PC-3 (cell line): ENCODE measurements at regions of chr13 and their contacts with region 1.

Region 1: DNA sequence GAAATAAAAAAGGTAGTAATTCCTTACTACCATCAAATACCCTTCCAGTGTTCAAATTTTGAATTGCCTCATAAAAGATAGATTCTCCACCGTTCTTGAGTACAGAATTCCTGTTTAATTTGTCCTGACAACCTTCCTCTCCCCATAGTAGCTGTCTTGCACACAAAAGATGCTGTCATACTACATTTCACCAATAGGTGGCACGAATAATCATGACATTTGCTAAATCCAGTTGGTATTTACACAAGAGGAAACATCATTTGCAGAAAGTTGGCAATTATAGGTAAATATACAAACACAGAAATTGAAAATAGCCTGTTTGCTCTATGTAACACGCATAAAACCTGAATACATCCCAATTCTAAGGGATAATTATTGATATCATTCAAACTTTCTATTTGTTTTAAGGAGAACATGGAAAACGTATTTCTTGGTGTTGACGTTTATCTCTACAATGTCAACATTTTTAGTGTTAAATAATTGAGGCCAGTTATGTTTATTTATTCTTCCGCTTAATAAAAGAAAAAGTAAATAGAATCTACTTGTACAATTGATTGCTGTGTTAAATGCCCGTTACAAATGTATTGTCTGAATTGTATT is 58.3 kb upstream of the CLDN10 start:
- DNase-seq: peak; percentile 83
- ATAC-seq: peak; percentile 72
- H3K4me3 ChIP-seq: no peak overlapping the region
- H3K27ac ChIP-seq: no peak overlapping the region
- H3K4me1 ChIP-seq: no peaks in the 10 kb centered on the region
- H3K27me3 ChIP-seq: no peaks in the 10 kb centered on the region
- CTCF ChIP-seq: peak; percentile 77

Region 2: GRCh38 chr13:94829185-94829856 is 664.9 kb before region 1 on chr13:
- CTCF ChIA-PET with region 1: no interaction called
- POLR2A ChIA-PET with region 1: interaction called, 16 read pairs
- intact Hi-C with region 1: no loop called
- DNase-seq: no peak
- ATAC-seq: no peak
- H3K4me3 ChIP-seq: no peak overlapping the region
- H3K27ac ChIP-seq: no peak overlapping the region
- H3K4me1 ChIP-seq: no peaks in the 10 kb centered on the region
- H3K27me3 ChIP-seq: no peaks in the 10 kb centered on the region
- CTCF ChIP-seq: no peak

Region 3: DNA sequence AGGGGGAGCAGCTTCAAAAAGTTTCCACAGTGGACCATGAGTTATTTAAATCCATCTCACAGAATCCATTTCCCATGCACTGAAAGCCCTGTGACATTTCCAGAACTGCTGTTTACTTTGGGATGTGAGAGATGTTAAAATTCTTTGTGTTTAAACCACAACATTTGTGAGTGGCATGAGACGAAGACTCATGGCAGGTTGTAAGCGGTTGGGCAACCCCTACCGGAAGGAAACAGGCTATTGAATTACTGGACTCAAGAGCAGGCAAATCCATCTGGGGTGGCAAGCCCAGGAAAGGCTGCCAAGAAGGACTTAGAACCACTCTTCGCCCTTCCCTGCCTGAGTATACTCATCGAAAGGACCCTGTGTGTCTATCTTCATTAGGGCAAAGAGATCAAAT is 36.0 kb after region 1 on chr13:
- CTCF ChIA-PET with region 1: no interaction called
- POLR2A ChIA-PET with region 1: no interaction called
- intact Hi-C with region 1: loop called (anchors 2 kb)
- DNase-seq: peak; percentile 90
- ATAC-seq: peak; percentile 72
- H3K4me3 ChIP-seq: no peak overlapping the region
- H3K27ac ChIP-seq: no peak overlapping the region; the same call in 1 of the 2 replicates
- H3K4me1 ChIP-seq: peaks cover 49% of the 10 kb centered on the region
- H3K27me3 ChIP-seq: no peaks in the 10 kb centered on the region
- CTCF ChIP-seq: no peak

Region 4: DNA sequence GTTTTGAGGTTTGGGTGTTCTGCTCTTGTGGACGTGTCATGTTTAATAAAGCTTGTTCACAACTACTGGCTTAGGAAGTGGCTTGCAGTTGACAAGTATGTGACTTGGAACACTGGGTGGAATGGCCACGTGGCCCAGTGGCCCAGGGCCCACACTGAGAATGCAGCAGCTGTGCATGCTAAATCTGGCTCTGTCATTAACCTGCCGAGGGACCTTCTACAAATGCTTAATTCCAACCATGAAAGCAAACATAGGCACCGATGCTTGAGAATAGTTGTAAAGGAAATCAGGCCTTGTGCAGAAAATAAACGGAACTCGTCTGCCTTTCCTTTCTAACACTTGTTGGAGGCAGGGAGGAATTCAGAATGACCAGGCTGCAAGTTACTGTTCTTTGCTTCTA is 46.7 kb after region 1 on chr13:
- CTCF ChIA-PET with region 1: no interaction called
- POLR2A ChIA-PET with region 1: no interaction called
- intact Hi-C with region 1: no loop called
- DNase-seq: no peak
- ATAC-seq: no peak
- H3K4me3 ChIP-seq: no peak overlapping the region
- H3K27ac ChIP-seq: no peak overlapping the region
- H3K4me1 ChIP-seq: peaks cover 7% of the 10 kb centered on the region
- H3K27me3 ChIP-seq: no peaks in the 10 kb centered on the region
- CTCF ChIP-seq: no peak

Region 5: GRCh38 chr13:95564733-95565291 is 70.6 kb after region 1 on chr13:
- CTCF ChIA-PET with region 1: interaction called, 5 read pairs
- POLR2A ChIA-PET with region 1: no interaction called
- intact Hi-C with region 1: loop called (anchors 2 kb)
- DNase-seq: peak; percentile 23
- ATAC-seq: peak; percentile 37; the same call in 1 of the 2 replicates
- H3K4me3 ChIP-seq: no peak overlapping the region
- H3K27ac ChIP-seq: no peak overlapping the region
- H3K4me1 ChIP-seq: peaks cover 9% of the 10 kb centered on the region
- H3K27me3 ChIP-seq: no peaks in the 10 kb centered on the region
- CTCF ChIP-seq: no peak